ENCODE measurements at regions of chr17 and their contacts with region 1.

Region 1: GRCh38 chr17:31517524-31517923 is 126.0 kb downstream of the RAB11FIP4 start:
- DNase-seq: no peak
- H3K4me3 Mint-ChIP-seq: no peak overlapping the region
- H3K27ac Mint-ChIP-seq: no peak overlapping the region
- H3K4me1 Mint-ChIP-seq: peaks cover 21% of the 10 kb centered on the region
- H3K27me3 Mint-ChIP-seq: no peaks in the 10 kb centered on the region

Region 2: DNA sequence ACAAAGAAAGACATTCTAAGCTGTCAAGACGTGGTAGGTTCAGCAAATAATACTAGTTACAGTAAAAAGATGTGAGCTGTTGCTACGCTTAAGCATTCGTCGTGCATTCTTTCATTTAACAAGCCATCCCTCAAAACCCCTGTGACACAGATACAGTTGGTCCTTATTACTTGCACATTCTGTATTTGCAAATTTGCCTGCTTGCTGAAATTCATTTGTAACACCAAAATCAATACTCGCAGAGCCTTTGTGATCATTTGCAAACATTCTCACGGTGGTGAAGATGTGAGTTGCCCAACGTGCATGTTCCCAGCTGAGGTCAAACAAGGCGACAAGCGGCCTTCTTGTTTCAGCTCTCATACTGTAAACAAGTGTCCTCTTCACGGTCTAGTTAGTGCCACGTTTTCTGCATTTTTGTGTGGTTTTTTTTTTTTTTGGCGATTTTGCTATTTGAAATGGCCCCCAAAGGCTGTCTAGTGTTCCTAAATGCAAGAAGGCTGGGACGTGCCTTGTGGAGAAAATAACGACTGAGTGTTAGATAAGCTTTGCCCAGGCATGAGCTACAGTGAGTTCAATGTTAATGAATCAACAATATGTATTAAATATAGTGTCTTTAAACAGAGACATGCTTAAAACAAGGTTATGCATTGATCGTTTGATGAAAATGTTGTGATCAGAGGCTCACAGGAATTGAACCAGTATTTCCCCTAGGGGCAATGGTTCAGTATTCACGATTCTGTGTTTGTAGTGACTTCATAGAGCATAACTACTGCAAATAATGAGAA is 42.0 kb before region 1 on chr17:
- CTCF ChIA-PET with region 1: no interaction called
- intact Hi-C with region 1: loop called (anchors 5 kb)
- DNase-seq: no peak
- H3K4me3 Mint-ChIP-seq: no peak overlapping the region
- H3K27ac Mint-ChIP-seq: no peak overlapping the region
- H3K4me1 Mint-ChIP-seq: no peaks in the 10 kb centered on the region
- H3K27me3 Mint-ChIP-seq: no peaks in the 10 kb centered on the region

Region 3: GRCh38 chr17:31570951-31571892 is 53.7 kb after region 1 on chr17:
- CTCF ChIA-PET with region 1: no interaction called
- intact Hi-C with region 1: no loop called
- DNase-seq: no peak
- H3K4me3 Mint-ChIP-seq: no peak overlapping the region
- H3K27ac Mint-ChIP-seq: no peak overlapping the region
- H3K4me1 Mint-ChIP-seq: no peaks in the 10 kb centered on the region
- H3K27me3 Mint-ChIP-seq: no peaks in the 10 kb centered on the region

Region 4: GRCh38 chr17:31672161-31672819 is 154.8 kb after region 1 on chr17:
- CTCF ChIA-PET with region 1: no interaction called
- intact Hi-C with region 1: no loop called
- DNase-seq: no peak
- H3K4me3 Mint-ChIP-seq: no peak overlapping the region
- H3K27ac Mint-ChIP-seq: no peak overlapping the region
- H3K4me1 Mint-ChIP-seq: no peaks in the 10 kb centered on the region
- H3K27me3 Mint-ChIP-seq: peaks cover 64% of the 10 kb centered on the region